HCT116 (cell line): ENCODE measurements at regions of chr2 and their contacts with region 1.

Region 1: DNA sequence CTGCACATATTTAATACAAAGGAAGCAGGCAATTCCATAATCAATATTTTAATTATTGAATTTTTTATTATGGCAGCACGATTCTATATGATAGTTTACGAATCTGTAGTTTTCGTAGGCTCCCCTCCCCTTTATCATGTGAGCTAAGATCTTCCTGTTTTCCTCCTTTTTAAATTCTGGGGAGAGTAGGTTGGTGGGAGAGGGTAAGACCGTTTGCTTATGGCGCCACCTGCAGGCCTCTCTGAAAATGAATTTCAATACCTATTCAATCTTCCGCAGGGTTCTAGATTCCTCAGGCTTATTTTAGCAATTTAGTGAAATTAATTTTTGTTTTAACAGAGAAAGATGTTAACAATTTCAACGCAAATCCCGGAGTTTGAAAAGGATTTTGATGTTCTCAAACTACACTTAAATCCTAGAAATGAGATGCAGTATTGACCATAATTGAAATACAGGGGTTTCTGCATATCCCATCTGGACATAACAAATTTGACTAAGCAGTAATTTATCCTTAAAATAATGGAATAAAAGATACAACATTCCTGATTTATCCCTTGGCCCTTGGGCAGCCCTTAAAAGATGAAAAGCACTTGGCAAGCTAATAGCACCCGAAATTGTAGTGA is 12.8 kb upstream of the GBX2 start:
- DNase-seq: peak; percentile 42
- ATAC-seq: peak; percentile 41
- H3K4me3 ChIP-seq: no peak overlapping the region
- H3K27ac ChIP-seq: no peak overlapping the region
- H3K4me1 ChIP-seq: peaks cover 2 to 38% of the 10 kb centered on the region in 2 experiments; a peak in 3 of 4 replicates
- H3K27me3 ChIP-seq: no peaks in the 10 kb centered on the region
- CTCF ChIP-seq: peak; percentile 62 to 81 (median 76)
- POLR2A ChIP-seq: no peak
- RAD21 ChIP-seq: peak; percentile 87

Region 2: DNA sequence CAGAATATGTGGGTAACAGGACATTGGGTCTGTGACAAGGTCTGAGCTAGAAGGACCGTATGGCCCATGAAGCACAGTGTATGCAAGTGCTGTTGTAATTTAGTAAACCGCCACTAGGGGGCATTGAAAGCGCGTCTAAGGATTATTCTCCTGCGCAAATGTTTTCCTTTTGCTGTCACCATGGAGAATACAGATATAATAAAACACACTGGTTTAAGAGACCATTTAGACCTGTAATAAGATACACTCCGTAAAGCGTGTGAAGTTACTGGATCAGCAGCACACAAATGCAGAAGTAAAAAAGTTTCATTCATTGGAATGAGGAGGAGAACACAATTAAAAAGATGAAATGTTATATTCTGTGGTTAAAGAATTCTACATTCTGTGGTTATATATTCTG is 414.7 kb before region 1 on chr2:
- CTCF ChIA-PET with region 1: interaction called, 20 read pairs
- POLR2A ChIA-PET with region 1: no interaction called
- RAD21 ChIA-PET with region 1: no interaction called
- intact Hi-C with region 1: loop called (anchors 2 kb)
- DNase-seq: peak; percentile 62
- ATAC-seq: peak; percentile 88
- H3K4me3 ChIP-seq: no peak overlapping the region
- H3K27ac ChIP-seq: no peak overlapping the region
- H3K4me1 ChIP-seq: peaks cover 0 to 18% of the 10 kb centered on the region in 2 experiments; a peak in 2 of 4 replicates
- H3K27me3 ChIP-seq: no peaks in the 10 kb centered on the region
- CTCF ChIP-seq: peak; percentile 69 to 91 (median 80); a peak in 5 of 6 replicates
- POLR2A ChIP-seq: no peak
- RAD21 ChIP-seq: peak; percentile 74

Region 3: GRCh38 chr2:235802538-235803427 is 378.2 kb before region 1 on chr2:
- CTCF ChIA-PET with region 1: interaction called, 3 read pairs
- POLR2A ChIA-PET with region 1: no interaction called
- RAD21 ChIA-PET with region 1: interaction called, 3 to 5 read pairs
- intact Hi-C with region 1: loop called (anchors 1 kb)
- DNase-seq: no peak
- ATAC-seq: no peak
- H3K4me3 ChIP-seq: no peak overlapping the region
- H3K27ac ChIP-seq: no peak overlapping the region
- H3K4me1 ChIP-seq: no peaks in the 10 kb centered on the region
- H3K27me3 ChIP-seq: no peaks in the 10 kb centered on the region
- CTCF ChIP-seq: 0 out of 6 replicates have a peak, but pooled peaks of 1 of the 3 experiments have one; percentile 0
- POLR2A ChIP-seq: no peak
- RAD21 ChIP-seq: peak; percentile 49

Region 4: GRCh38 chr2:236075802-236076201 is 105.1 kb before region 1 on chr2:
- CTCF ChIA-PET with region 1: no interaction called
- POLR2A ChIA-PET with region 1: no interaction called
- RAD21 ChIA-PET with region 1: no interaction called
- intact Hi-C with region 1: loop called (anchors 5 kb)
- DNase-seq: no peak
- ATAC-seq: no peak
- H3K4me3 ChIP-seq: no peak overlapping the region
- H3K27ac ChIP-seq: no peak overlapping the region
- H3K4me1 ChIP-seq: peaks cover 17 to 18% of the 10 kb centered on the region in 2 experiments
- H3K27me3 ChIP-seq: no peaks in the 10 kb centered on the region
- CTCF ChIP-seq: no peak
- POLR2A ChIP-seq: no peak
- RAD21 ChIP-seq: no peak

Region 5: DNA sequence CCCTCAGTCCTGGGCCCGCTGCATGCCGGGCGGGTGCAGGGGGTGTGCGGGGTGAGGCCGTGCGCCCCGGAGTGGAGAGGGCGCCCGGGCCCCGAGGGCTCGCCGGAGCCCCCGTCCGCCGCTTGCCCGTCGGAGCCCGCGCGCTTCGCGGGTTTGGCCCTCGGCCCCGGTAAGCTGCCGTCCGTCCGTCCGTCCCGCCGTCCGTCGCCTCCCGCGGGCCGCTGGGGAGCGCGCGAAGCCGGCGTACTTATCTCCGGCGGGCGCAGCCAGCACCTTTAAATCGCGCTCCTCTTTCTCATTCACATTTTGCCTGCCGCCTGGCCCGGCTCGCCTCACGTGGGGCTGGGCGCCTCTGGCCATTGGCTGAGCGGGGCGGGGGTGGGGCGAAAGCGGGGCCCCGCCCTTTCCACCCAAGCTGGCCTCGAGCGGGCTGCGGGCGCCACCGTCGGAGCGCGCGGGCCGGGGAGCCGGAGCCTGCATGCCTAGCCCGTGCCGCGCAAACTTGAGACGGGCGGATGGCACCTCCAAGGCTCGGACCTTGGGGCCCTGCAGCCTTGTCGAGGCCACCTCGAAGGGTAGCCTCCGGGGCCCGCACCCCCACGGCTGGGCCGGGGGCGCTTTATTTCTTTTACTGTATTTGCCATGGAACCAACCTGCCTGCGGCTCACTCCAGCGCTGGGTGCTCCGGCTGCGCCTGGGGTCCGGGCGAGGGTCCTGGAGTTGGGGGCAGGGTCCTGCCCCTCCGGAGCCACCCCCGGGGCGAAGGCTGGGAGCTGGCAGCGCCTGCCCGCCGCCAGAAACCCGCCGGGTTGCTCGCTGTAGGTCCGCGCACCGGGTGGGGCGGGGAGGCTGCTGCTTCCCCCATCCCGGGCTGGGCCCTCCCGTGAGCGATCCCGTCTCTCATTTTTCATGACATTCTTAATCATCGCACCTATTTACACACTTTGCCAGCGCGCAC is 12.6 kb before region 1 on chr2 and contains the start of gene GBX2:
- CTCF ChIA-PET with region 1: interaction called, 16 read pairs
- POLR2A ChIA-PET with region 1: no interaction called
- RAD21 ChIA-PET with region 1: no interaction called
- intact Hi-C with region 1: no loop called
- DNase-seq: peak; percentile 80
- ATAC-seq: peak; percentile 78
- H3K4me3 ChIP-seq: peak within 1 kb of the TSS; percentile 61 to 93
- H3K27ac ChIP-seq: peak within 1 kb of the TSS; percentile 87
- H3K4me1 ChIP-seq: peaks cover 0 to 26% of the 10 kb centered on the region in 2 experiments; a peak in 1 of 4 replicates
- H3K27me3 ChIP-seq: no peaks in the 10 kb centered on the region
- CTCF ChIP-seq: no peak
- POLR2A ChIP-seq: peak; percentile 56
- RAD21 ChIP-seq: no peak
- total RNA-seq, gene GBX2: 5.9 TPM

Region 6: DNA sequence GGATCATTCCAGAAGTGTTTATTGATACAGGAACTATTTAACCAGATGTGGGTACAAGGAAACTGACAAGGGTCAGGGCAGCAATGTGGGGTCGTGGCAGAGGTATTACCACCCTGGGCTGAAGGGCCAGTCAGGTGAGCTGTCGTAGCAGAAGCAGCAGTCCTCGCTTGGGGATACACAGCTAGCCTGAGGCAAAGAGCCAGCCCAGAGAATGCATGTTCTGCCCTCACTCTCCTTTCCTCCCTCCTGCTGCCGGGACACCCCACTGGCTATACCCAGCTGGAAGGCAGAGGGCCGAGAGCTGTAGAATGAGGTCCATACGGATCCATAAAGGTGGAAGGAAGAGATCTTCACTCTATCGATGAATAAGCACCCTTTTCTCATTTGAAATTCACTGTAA is 19.4 kb after region 1 on chr2:
- CTCF ChIA-PET with region 1: interaction called, 14 read pairs
- POLR2A ChIA-PET with region 1: no interaction called
- RAD21 ChIA-PET with region 1: no interaction called
- intact Hi-C with region 1: no loop called
- DNase-seq: no peak
- ATAC-seq: no peak
- H3K4me3 ChIP-seq: no peak overlapping the region
- H3K27ac ChIP-seq: no peak overlapping the region
- H3K4me1 ChIP-seq: no peaks in the 10 kb centered on the region
- H3K27me3 ChIP-seq: no peaks in the 10 kb centered on the region
- CTCF ChIP-seq: no peak
- POLR2A ChIP-seq: no peak
- RAD21 ChIP-seq: no peak